ENCODE measurements at regions of chr14 and their contacts with region 1.

Region 1: GRCh38 chr14:73759714-73760597 is 45.8 kb upstream of the PNMA1 start:
- DNase-seq: peak; percentile 100
- H3K4me3 ChIP-seq: peak overlapping the region; percentile 45 to 93 (median 84)
- H3K27ac ChIP-seq: peak overlapping the region; percentile 91
- H3K4me1 ChIP-seq: peaks cover 44% of the 10 kb centered on the region
- H3K27me3 ChIP-seq: no peaks in the 10 kb centered on the region
- CTCF ChIP-seq: no peak

Region 2: DNA sequence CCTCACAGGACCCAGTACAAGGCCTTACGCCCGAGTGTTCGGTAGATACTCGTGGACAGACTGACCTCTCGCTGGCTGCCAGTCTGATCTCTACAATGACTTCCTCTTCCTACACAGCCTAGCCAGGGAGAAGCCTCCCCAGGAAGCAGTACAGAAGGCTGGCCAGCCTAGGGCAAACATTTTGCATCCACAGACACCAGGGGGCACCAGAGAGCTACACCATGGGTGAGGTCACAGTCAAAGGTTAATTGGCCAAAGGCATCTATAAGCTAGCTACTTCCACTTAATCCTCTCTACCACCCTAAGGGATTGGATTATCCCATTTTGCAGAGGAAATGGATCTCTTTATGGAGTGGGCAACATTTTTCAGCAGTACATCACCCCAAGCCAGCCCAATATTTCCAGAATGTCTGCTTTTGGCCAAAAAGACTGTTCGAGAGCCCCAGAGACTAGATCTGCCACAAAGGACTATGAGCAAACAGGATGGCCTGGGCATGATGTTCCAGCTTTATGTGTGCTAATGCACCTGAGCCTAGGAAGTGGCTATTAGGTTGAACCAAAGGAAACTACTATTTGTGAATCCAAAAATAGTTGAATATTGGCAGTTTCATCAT is 31.1 kb before region 1 on chr14:
- CTCF ChIA-PET with region 1: interaction called, 6 read pairs
- dilution Hi-C with region 1: no loop called
- in situ Hi-C with region 1: no loop called
- intact Hi-C with region 1: loop called (anchors 1 kb)
- DNase-seq: peak; percentile 50
- H3K4me3 ChIP-seq: no peak overlapping the region
- H3K27ac ChIP-seq: no peak overlapping the region
- H3K4me1 ChIP-seq: peaks cover 42% of the 10 kb centered on the region
- H3K27me3 ChIP-seq: no peaks in the 10 kb centered on the region
- CTCF ChIP-seq: peak; percentile 92 to 95

Region 3: GRCh38 chr14:73802431-73803188 is 42.7 kb after region 1 on chr14:
- CTCF ChIA-PET with region 1: no interaction called
- dilution Hi-C with region 1: no loop called
- in situ Hi-C with region 1: no loop called
- intact Hi-C with region 1: loop called (anchors 1 kb)
- DNase-seq: peak; percentile 89
- H3K4me3 ChIP-seq: no peak overlapping the region
- H3K27ac ChIP-seq: peak overlapping the region; percentile 56
- H3K4me1 ChIP-seq: peaks cover 24% of the 10 kb centered on the region
- H3K27me3 ChIP-seq: no peaks in the 10 kb centered on the region
- CTCF ChIP-seq: no peak

Region 4: GRCh38 chr14:73825551-73826188 is 65.7 kb after region 1 on chr14:
- CTCF ChIA-PET with region 1: interaction called, 3 read pairs
- dilution Hi-C with region 1: no loop called
- in situ Hi-C with region 1: no loop called
- intact Hi-C with region 1: loop called (anchors 1 kb)
- DNase-seq: peak; percentile 64
- H3K4me3 ChIP-seq: no peak overlapping the region
- H3K27ac ChIP-seq: no peak overlapping the region
- H3K4me1 ChIP-seq: peaks cover 15% of the 10 kb centered on the region
- H3K27me3 ChIP-seq: no peaks in the 10 kb centered on the region
- CTCF ChIP-seq: peak; percentile 80 to 95

Region 5: GRCh38 chr14:73851644-73852382 is 91.9 kb after region 1 on chr14 and contains the start of gene PTGR2:
- CTCF ChIA-PET with region 1: interaction called, 5 read pairs
- dilution Hi-C with region 1: no loop called
- in situ Hi-C with region 1: no loop called
- intact Hi-C with region 1: loop called (anchors 1 kb)
- DNase-seq: peak; percentile 92
- H3K4me3 ChIP-seq: peak within 1 kb of the TSS; percentile 49 to 95 (median 68)
- H3K27ac ChIP-seq: peak within 1 kb of the TSS; percentile 92
- H3K4me1 ChIP-seq: peaks cover 20% of the 10 kb centered on the region
- H3K27me3 ChIP-seq: no peaks in the 10 kb centered on the region
- CTCF ChIP-seq: peak in 1 of 2 donors; percentile 16
- total RNA-seq, gene PTGR2: 8.2 to 9.5 TPM

Region 6: DNA sequence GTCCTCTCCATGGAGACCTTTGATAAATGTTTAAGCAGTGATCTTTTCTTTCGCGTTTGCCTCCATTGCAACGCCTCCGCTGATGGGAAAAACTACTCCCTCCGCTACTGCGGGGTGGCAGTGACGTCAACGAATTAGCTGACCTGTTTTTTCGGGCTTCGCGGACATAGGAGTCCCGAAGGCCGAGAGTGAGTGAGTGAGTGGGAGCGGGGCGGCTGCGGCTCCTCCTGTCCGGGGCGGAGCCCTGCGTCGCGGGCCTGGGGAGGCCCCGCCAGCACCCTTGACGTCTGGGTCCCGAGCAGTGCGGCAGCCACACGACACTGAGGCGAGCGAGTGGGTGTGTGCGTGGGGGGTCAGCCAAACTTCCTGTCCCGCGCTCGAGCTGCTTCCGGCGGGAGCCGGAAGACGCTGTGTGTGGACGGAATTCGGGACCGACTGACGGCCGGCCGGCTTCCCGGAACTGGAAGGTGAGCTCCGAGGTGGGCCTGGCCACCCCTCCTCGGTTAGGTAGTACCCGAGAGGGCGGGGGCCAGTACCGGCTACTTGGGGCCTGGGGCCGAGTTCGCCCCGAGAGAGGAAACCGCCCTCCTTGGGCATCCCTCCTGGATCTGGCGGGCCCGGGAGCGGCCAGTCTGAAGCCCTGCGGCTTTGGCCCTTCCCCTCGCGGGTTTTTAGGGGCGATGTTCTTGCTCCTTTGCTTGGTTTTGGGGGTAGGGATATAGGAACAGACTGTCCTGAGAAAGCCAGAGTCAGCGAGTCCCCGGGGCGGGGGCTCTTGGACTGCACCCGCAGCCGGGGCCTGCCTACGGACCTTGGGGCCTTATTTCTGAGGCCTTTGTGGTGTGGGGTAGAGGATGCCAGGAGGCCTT is 126.7 kb after region 1 on chr14 and contains the start of gene ZNF410:
- CTCF ChIA-PET with region 1: no interaction called
- dilution Hi-C with region 1: no loop called
- in situ Hi-C with region 1: no loop called
- intact Hi-C with region 1: loop called (anchors 5 kb)
- DNase-seq: peak; percentile 98
- H3K4me3 ChIP-seq: peak within 1 kb of the TSS; percentile 83 to 94 (median 89)
- H3K27ac ChIP-seq: peak within 1 kb of the TSS; percentile 79
- H3K4me1 ChIP-seq: peaks cover 17% of the 10 kb centered on the region
- H3K27me3 ChIP-seq: no peaks in the 10 kb centered on the region
- CTCF ChIP-seq: no peak
- total RNA-seq, gene ZNF410: 58.3 to 93.9 TPM